Heart right ventricle (tissue), 16 donors: ENCODE measurements at regions of chr1 and their contacts with region 1.

Region 1: GRCh38 chr1:21189906-21190500 is 13.3 kb upstream of the EIF4G3 start:
- DNase-seq: no peak
- ATAC-seq: no peak
- H3K4me3 ChIP-seq: no peak overlapping the region
- H3K27ac ChIP-seq: no peak overlapping the region
- H3K4me1 ChIP-seq: peaks cover 0 to 26% (median 14%) of the 10 kb centered on the region in 9 donors
- H3K27me3 ChIP-seq: no peaks in the 10 kb centered on the region
- CTCF ChIP-seq: no peak

Region 2: GRCh38 chr1:20786253-20787028 is 403.6 kb before region 1 on chr1:
- intact Hi-C with region 1: loop called in 1 of 10 experiments (anchors 10 kb)
- DNase-seq: peak; percentile 93 to 97
- ATAC-seq: peak; percentile 94 to 97 (median 96)
- H3K4me3 ChIP-seq: peak overlapping the region; percentile 63 to 99 (median 94)
- H3K27ac ChIP-seq: peak overlapping the region; percentile 90 to 99 (median 98)
- H3K4me1 ChIP-seq: peaks cover 0 to 52% (median 38%) of the 10 kb centered on the region in 9 donors
- H3K27me3 ChIP-seq: no peaks in the 10 kb centered on the region
- CTCF ChIP-seq: no peak

Region 3: GRCh38 chr1:20981915-20982314 is 208.1 kb before region 1 on chr1:
- intact Hi-C with region 1: loop called (anchors 2 to 10 kb)
- DNase-seq: no peak
- ATAC-seq: peak in 5 of 8 donors; percentile 61 to 78 (median 63)
- H3K4me3 ChIP-seq: no peak overlapping the region
- H3K27ac ChIP-seq: peak overlapping the region in 1 of 10 donors; percentile 23
- H3K4me1 ChIP-seq: peaks cover 0 to 11% (median 0%) of the 10 kb centered on the region in 9 donors
- H3K27me3 ChIP-seq: no peaks in the 10 kb centered on the region
- CTCF ChIP-seq: peak in 7 of 9 donors; percentile 21 to 65 (median 44)

Region 4: GRCh38 chr1:20987831-20988825 is 201.9 kb before region 1 on chr1:
- intact Hi-C with region 1: loop called (anchors 2 to 10 kb)
- DNase-seq: no peak
- ATAC-seq: no peak
- H3K4me3 ChIP-seq: no peak overlapping the region
- H3K27ac ChIP-seq: no peak overlapping the region
- H3K4me1 ChIP-seq: peaks cover 0 to 17% (median 6%) of the 10 kb centered on the region in 9 donors
- H3K27me3 ChIP-seq: no peaks in the 10 kb centered on the region
- CTCF ChIP-seq: no peak

Region 5: DNA sequence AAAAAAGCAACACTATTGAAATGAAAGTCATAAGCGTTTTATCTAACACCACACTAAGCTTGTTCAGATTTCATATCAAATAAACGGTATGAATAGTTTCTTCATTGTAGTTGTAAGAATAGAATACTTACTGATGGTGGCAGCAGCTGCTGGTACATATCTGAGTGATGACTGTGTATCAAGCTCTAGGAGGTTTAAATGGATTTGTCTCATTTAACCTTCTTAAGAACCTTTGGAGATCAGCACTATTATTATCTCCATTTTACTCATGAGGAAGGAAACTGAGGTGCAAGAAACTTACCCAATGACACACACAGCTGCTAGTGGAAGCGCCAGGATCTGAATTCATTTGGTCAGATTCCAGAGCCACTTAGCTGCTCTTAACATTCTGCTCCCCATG is 117.3 kb before region 1 on chr1:
- intact Hi-C with region 1: loop called in 1 of 10 experiments (anchors 5 kb)
- DNase-seq: no peak
- ATAC-seq: peak in 1 of 8 donors; percentile 28
- H3K4me3 ChIP-seq: no peak overlapping the region
- H3K27ac ChIP-seq: no peak overlapping the region
- H3K4me1 ChIP-seq: peaks cover 0 to 50% (median 12%) of the 10 kb centered on the region in 9 donors
- H3K27me3 ChIP-seq: no peaks in the 10 kb centered on the region
- CTCF ChIP-seq: peak in 1 of 9 donors; percentile 26

Region 6: DNA sequence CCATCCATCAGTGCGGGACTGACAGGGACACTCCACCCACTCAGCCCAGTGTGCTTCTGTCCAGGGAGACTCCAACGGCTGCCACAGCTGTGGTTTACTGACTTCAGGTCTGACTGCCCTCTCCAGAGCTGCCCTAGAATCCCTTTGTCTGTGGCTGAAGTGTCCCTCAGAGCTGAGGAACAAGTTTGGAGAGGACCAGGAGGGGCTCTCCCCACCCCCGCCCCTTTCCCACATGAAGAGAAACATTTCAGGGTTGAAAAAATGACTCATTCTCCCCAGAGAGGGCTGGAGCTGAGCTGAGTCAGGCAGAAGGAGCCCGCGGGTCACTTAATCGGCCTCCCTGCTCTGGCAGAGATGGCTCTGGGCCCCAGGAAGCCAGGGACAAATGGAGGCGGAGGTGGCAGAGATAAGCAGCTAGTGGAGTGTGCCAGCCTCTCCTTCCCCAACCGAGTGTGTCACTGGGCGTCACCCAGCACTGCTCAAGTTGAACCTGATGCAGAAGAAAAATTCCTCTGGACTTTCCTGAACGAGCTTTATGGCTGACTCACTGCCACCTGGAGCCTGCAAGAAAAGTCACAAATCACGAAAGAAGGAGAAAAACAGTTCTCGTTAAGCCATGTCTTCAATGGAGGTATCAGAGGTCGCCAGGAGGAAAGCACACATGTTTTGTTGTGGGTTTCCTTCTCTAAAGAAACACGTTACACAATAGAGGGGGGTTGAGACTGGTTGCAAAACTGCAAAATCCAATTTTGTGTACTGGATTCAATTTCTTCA is 134.6 kb after region 1 on chr1:
- intact Hi-C with region 1: no loop called
- DNase-seq: peak; percentile 77 to 80
- ATAC-seq: peak; percentile 65 to 85 (median 76)
- H3K4me3 ChIP-seq: peak overlapping the region in 1 of 10 donors; percentile 0
- H3K27ac ChIP-seq: peak overlapping the region; percentile 63 to 92 (median 86)
- H3K4me1 ChIP-seq: peaks cover 57 to 87% (median 80%) of the 10 kb centered on the region in 9 donors
- H3K27me3 ChIP-seq: no peaks in the 10 kb centered on the region
- CTCF ChIP-seq: peak in 1 of 9 donors; percentile 12